ENCODE measurements at regions of chr10 and their contacts with region 1.

Region 1: DNA sequence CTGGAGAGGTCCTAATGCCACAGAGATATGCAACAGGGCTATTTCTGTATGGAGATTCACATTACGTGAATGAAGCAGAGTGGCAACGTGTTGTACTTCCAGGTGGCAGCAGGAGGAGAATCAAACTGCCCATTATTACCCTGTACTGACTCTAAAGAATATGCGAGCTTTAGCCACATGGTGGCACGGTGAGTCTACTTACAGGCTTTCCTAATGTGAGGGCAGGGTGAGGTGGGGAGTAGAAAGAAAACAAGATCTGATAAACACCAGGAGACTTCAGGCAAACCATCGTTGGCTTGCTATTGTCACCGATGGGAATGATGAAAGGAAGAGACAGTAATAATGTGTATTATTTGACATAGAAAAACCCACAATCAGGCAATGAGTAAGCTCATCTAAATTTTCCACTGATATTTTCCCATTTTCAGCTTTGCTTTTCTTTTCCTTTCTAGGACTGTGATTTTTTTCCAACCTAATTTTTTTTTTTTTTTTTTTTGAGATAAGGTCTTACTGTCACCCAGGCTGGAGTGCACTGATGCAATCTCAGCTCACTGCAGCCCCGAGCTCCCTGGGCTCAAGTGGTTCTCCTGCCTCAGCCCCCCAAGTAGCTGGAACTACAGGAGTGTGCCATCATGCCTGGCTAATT is 164.3 kb downstream of the BTAF1 start:
- DNase-seq: peak; percentile 83 to 86
- ATAC-seq: peak; percentile 100
- H3K4me3 ChIP-seq: no peak overlapping the region
- H3K27ac ChIP-seq: peak overlapping the region in 1 of 2 experiments; percentile 30; a peak in 1 of 6 replicates
- H3K4me1 ChIP-seq: peaks cover 4% of the 10 kb centered on the region; the same call in 1 of the 3 replicates
- CTCF ChIP-seq: peak; percentile 94
- EP300 ChIP-seq: no peak
- POLR2A ChIP-seq: no peak
- RAD21 ChIP-seq: peak; percentile 97

Region 2: DNA sequence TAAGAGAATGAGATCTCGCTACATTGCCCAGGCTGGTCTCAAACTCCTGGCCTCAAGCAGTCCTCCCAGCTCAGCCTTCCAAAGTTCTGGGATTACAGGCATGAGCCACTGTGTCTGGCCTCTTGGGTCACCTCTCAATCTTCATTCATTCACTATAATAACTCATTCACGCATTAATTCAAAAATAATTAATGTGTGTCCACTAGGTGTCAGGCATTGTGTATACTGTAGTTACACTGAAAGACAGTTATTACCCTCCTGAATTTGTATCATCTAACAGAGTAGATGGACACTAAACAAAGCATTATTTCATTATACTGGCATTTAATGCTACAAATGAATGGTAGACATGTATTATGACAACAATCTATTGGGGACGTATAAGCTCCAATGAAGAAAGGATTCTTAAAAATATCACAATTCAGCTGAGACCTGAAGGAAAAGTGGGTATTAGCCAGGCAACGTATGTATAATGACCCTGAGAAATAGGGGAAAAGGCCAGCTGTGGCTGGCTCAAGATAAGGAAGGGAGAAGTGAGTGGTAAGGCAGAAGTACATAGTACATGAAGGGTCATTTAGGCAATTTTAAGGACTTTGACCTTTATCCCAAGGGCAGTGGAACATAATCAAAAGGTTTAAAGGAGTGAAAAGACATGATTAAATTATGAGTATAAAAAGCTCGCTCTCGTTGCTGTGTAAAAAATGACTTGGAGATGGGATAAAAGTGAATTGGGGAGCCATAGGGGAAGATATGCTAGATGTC is 13.6 kb before region 1 on chr10:
- CTCF ChIA-PET with region 1: interaction called, 22 read pairs
- POLR2A ChIA-PET with region 1: no interaction called
- DNase-seq: peak in 1 of 2 experiments; percentile 13
- ATAC-seq: peak; percentile 24 to 54; a peak in 3 of 6 replicates
- H3K4me3 ChIP-seq: no peak overlapping the region
- H3K27ac ChIP-seq: no peak overlapping the region
- H3K4me1 ChIP-seq: no peaks in the 10 kb centered on the region
- CTCF ChIP-seq: 0 out of 3 replicates have a peak, but pooled peaks have one; percentile 26
- EP300 ChIP-seq: no peak
- POLR2A ChIP-seq: no peak
- RAD21 ChIP-seq: peak; percentile 25 to 47; a peak in 2 of 5 replicates

Region 3: DNA sequence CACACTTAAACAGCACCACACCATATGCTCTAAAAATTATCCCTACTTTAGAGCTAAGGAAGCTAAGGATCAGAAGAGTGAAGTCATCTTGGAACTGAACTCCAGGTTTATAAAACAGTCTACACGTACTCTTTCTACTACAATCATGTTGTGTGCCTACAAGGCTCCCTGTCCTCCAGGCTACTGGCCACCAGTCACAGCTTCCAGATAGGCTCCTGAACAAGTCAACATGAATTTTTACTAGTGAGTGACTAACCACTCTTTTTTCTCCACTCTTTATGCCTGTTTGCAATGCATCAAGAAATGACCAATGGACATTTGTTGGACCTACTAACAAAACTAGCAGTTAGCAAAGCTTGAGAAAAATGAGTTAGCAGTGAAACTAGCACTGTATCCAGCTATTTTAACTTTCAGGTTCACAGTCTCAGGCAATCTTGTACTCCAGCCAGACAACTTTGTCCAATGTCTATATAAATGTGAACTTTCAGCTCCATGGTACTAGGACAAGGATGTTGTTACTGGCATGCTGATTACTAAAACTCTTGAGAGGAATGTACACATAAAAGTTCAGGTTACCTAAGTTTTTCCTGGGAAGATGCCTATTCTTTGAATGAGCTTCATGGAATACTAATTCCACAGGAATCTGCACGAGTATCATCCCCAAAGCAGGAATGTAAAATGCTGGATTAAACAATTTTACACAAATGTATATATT is 15.7 kb after region 1 on chr10:
- CTCF ChIA-PET with region 1: interaction called, 25 read pairs
- POLR2A ChIA-PET with region 1: no interaction called
- DNase-seq: no peak
- ATAC-seq: peak; percentile 11 to 42; a peak in 3 of 6 replicates
- H3K4me3 ChIP-seq: no peak overlapping the region
- H3K27ac ChIP-seq: no peak overlapping the region
- H3K4me1 ChIP-seq: peaks cover 22% of the 10 kb centered on the region
- CTCF ChIP-seq: no peak
- EP300 ChIP-seq: no peak
- POLR2A ChIP-seq: no peak
- RAD21 ChIP-seq: no peak

Region 4: DNA sequence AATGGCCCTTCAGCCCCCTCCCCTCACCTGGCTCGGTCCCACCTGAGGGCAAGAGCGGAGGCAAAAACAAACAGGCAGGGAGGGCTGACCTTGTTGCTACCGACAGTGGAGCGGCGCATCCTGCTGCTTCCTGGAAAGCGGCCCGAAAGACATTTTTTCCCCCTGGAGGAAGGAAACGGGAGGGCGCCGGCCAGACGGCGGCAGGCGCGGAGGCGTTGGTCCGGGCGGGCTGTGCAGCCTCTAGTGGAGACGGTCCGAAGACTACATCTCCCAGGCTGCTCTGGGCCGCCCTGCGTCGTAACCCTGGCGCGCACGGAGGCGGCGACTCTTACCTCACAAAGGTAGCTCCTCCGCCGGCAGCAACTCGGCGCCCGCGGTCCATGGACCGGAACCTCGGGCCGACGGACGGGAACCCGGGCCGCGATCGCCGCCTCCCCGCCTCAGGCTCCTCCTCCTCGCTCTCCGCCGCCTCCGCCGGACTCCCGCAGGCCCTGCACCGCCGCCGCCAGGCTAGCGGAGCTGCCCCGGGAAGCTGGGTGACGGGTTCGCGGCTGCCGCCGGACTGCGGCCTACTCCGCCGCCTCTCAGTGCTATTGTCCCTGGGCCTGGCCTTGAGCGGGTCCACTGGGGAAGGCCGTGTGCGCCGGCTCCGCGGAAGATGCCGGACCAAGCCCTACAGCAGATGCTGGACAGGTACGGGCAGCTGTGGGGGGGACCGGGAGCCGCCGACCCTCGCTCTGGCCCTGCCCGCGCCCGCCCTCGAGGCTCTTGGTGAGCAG is 203.2 kb after region 1 on chr10 and contains the starts of genes CPEB3 and MARCHF5:
- CTCF ChIA-PET with region 1: interaction called, 84 read pairs
- POLR2A ChIA-PET with region 1: interaction called, 8 read pairs
- DNase-seq: peak; percentile 92 to 97
- ATAC-seq: peak; percentile 97 to 99
- H3K4me3 ChIP-seq: peak within 1 kb of the TSS; percentile 81
- H3K27ac ChIP-seq: peak within 1 kb of the TSS; percentile 91 to 95
- H3K4me1 ChIP-seq: peaks cover 9% of the 10 kb centered on the region; the same call in 2 of the 3 replicates
- CTCF ChIP-seq: no peak; the same call in 2 of the 3 replicates
- EP300 ChIP-seq: no peak
- POLR2A ChIP-seq: peak; percentile 55
- RAD21 ChIP-seq: peak in 1 of 2 experiments; percentile 24; a peak in 4 of 5 replicates
- polyA plus RNA-seq, gene CPEB3: 0.37 and 0.49 TPM in 2 replicates
- polyA plus RNA-seq, gene MARCHF5: 37.3 and 39.2 TPM in 2 replicates

Region 5: DNA sequence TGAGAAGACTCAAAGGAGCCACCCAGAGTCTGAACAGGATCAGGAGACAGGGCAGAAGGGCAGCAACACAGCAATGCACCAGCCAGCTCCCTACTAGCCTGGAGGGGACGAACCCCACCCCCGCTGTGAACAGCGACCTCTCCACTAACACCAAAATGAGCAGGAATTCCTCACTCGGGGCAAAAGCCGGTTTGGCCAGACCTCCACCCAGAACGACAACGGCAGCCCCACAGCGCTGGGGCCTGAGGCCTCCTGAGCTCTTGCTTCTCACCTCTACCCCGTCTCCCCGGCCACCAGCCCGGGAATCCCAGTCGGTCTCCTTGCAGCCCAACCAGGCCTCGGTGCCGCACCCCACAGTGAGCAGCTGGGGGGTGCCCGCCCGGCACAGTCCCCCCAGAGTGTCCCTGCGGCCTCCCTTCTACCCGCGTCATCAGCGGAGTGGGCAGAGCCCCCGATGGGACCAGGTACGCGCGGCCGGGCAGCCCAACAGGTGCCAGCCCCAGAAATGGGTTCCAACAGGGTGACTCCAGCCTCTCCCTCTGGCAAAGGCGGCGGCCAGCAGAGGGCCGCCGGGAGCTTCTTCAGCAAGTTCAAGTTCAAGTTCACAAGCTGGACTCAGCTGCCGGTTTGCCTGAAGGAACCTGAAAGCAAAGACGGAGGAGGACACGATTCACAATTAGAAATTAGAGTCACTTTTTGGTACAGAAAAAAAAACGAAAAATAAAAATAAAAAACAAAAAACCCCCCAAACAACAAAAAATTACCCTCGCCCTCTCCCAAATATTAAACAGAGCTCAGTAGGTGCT is 332.1 kb after region 1 on chr10:
- CTCF ChIA-PET with region 1: interaction called, 10 read pairs
- POLR2A ChIA-PET with region 1: no interaction called
- DNase-seq: no peak
- ATAC-seq: no peak
- H3K4me3 ChIP-seq: no peak overlapping the region
- H3K27ac ChIP-seq: no peak overlapping the region
- H3K4me1 ChIP-seq: no peaks in the 10 kb centered on the region
- CTCF ChIP-seq: no peak
- EP300 ChIP-seq: no peak
- POLR2A ChIP-seq: no peak
- RAD21 ChIP-seq: no peak

Region 6: GRCh38 chr10:92432596-92432995 is 344.7 kb after region 1 on chr10:
- CTCF ChIA-PET with region 1: interaction called, 50 read pairs
- POLR2A ChIA-PET with region 1: no interaction called
- DNase-seq: no peak
- ATAC-seq: no peak
- H3K4me3 ChIP-seq: no peak overlapping the region
- H3K27ac ChIP-seq: no peak overlapping the region
- H3K4me1 ChIP-seq: no peaks in the 10 kb centered on the region
- CTCF ChIP-seq: no peak
- EP300 ChIP-seq: no peak
- POLR2A ChIP-seq: no peak
- RAD21 ChIP-seq: no peak

Region 7: GRCh38 chr10:92440578-92440977 is 352.7 kb after region 1 on chr10:
- CTCF ChIA-PET with region 1: interaction called, 28 read pairs
- POLR2A ChIA-PET with region 1: no interaction called
- DNase-seq: no peak
- ATAC-seq: no peak
- H3K4me3 ChIP-seq: no peak overlapping the region
- H3K27ac ChIP-seq: no peak overlapping the region
- H3K4me1 ChIP-seq: no peaks in the 10 kb centered on the region
- CTCF ChIP-seq: no peak
- EP300 ChIP-seq: no peak
- POLR2A ChIP-seq: no peak
- RAD21 ChIP-seq: no peak